MCF 10A (cell line): ENCODE measurements at regions of chr12 and their contacts with region 1.

Region 1: DNA sequence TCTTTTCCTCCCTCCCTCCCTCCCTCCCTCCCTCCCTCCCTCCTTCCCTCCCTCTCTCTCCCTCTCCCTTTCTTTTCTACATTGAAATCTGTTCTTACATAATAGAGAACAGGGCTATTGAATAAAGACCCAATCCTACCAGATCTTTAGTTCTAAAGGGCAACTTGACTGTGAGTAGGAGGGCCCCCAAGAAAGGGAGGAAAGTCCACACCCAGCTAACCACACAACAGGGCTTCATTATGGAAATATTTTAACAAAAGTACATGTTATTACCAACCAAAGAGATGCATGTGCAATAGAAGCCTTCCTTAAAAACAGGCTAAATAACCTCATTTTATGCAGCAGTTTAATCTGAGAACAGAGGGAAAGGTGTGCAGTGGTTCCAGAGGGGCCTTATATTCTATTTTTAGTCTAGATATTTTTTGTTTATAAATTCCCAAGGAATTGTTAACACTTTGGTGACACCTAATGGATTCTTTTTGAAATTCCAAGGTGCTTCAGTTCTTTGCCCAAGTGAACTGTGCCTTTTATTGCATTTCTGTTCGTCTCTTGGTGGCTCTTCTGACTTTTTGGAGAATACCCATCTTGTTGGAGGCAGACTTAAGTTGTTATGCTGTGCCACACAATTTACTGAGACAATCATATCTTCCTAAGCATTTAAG is 63.0 kb downstream of the GNS start:
- DNase-seq: peak; percentile 39
- H3K4me3 Mint-ChIP-seq: no peak overlapping the region
- H3K27ac Mint-ChIP-seq: no peak overlapping the region
- H3K4me1 Mint-ChIP-seq: no peaks in the 10 kb centered on the region
- H3K27me3 Mint-ChIP-seq: no peaks in the 10 kb centered on the region
- CTCF ChIP-seq: peak; percentile 55

Region 2: DNA sequence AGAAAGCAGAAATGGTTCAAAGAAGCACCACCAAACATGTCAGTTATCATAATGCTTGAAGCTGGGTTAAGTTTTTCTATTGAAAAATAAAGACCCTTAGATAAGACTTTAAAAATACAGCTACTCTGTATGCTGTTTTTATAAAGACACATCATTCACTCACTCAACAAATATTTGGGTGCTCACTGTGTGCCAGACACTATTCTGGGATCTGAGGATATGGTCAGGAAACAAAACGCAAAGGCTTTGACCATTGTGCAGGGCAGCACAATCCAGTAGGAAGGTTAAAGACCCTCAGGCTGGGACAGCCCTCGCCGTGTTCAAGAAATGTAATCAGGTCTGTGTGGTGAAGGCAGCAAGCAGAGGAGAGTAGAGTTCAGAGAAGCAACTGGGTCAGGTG is 989.9 kb before region 1 on chr12:
- CTCF ChIA-PET with region 1: no interaction called
- POLR2A ChIA-PET with region 1: no interaction called
- intact Hi-C with region 1: no loop called
- DNase-seq: no peak
- H3K4me3 Mint-ChIP-seq: no peak overlapping the region
- H3K27ac Mint-ChIP-seq: no peak overlapping the region
- H3K4me1 Mint-ChIP-seq: no peaks in the 10 kb centered on the region
- H3K27me3 Mint-ChIP-seq: peaks cover 58% of the 10 kb centered on the region
- CTCF ChIP-seq: no peak

Region 3: GRCh38 chr12:64451687-64452558 is 244.3 kb before region 1 on chr12 and contains the start of gene TBK1:
- CTCF ChIA-PET with region 1: interaction called, 3 read pairs
- POLR2A ChIA-PET with region 1: interaction called, 3 read pairs
- intact Hi-C with region 1: loop called (anchors 10 kb)
- DNase-seq: peak; percentile 81
- H3K4me3 Mint-ChIP-seq: peak within 1 kb of the TSS; percentile 84
- H3K27ac Mint-ChIP-seq: peak within 1 kb of the TSS; percentile 96
- H3K4me1 Mint-ChIP-seq: no peaks in the 10 kb centered on the region
- H3K27me3 Mint-ChIP-seq: no peaks in the 10 kb centered on the region
- CTCF ChIP-seq: no peak
- total RNA-seq, gene TBK1: 19.6 and 23.0 TPM in 2 replicates

Region 4: GRCh38 chr12:64560396-64561304 is 135.6 kb before region 1 on chr12:
- CTCF ChIA-PET with region 1: interaction called, 16 read pairs
- POLR2A ChIA-PET with region 1: no interaction called
- intact Hi-C with region 1: no loop called
- DNase-seq: peak; percentile 86
- H3K4me3 Mint-ChIP-seq: no peak overlapping the region
- H3K27ac Mint-ChIP-seq: peak overlapping the region; percentile 78
- H3K4me1 Mint-ChIP-seq: peaks cover 17% of the 10 kb centered on the region
- H3K27me3 Mint-ChIP-seq: no peaks in the 10 kb centered on the region
- CTCF ChIP-seq: no peak

Region 5: GRCh38 chr12:64625243-64626077 is 70.8 kb before region 1 on chr12:
- CTCF ChIA-PET with region 1: interaction called, 3 read pairs
- POLR2A ChIA-PET with region 1: interaction called, 13 read pairs
- intact Hi-C with region 1: no loop called
- DNase-seq: peak; percentile 79
- H3K4me3 Mint-ChIP-seq: peak overlapping the region; percentile 73
- H3K27ac Mint-ChIP-seq: peak overlapping the region; percentile 94
- H3K4me1 Mint-ChIP-seq: peaks cover 26% of the 10 kb centered on the region
- H3K27me3 Mint-ChIP-seq: no peaks in the 10 kb centered on the region
- CTCF ChIP-seq: no peak

Region 6: GRCh38 chr12:64655144-64655543 is 41.1 kb before region 1 on chr12:
- CTCF ChIA-PET with region 1: no interaction called
- POLR2A ChIA-PET with region 1: no interaction called
- intact Hi-C with region 1: no loop called
- DNase-seq: no peak
- H3K4me3 Mint-ChIP-seq: no peak overlapping the region
- H3K27ac Mint-ChIP-seq: no peak overlapping the region
- H3K4me1 Mint-ChIP-seq: peaks cover 4% of the 10 kb centered on the region
- H3K27me3 Mint-ChIP-seq: no peaks in the 10 kb centered on the region
- CTCF ChIP-seq: no peak

Region 7: DNA sequence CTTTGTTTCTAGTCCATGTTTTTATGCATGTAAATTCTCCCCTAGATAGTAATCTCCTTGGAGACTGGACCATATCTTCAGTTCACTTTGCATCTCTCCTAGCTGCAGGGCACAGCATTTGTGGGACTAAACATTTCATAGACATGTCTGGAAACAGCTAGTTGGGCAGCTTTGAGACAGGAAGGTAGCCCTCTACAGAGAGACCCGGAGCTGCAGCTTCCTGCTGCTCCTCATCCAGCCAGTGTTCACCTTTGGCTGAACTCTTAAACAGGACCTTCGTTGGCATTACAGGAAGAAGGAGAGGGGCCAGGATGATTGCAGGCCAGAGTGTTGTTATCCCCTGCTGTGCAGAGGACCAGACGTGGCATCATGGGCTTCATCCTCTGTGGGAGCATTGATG is 10.1 kb after region 1 on chr12:
- CTCF ChIA-PET with region 1: interaction called, 26 read pairs
- POLR2A ChIA-PET with region 1: no interaction called
- intact Hi-C with region 1: no loop called
- DNase-seq: no peak
- H3K4me3 Mint-ChIP-seq: no peak overlapping the region
- H3K27ac Mint-ChIP-seq: no peak overlapping the region
- H3K4me1 Mint-ChIP-seq: no peaks in the 10 kb centered on the region
- H3K27me3 Mint-ChIP-seq: no peaks in the 10 kb centered on the region
- CTCF ChIP-seq: no peak